ENCODE measurements at regions of chr4 and their contacts with region 1.

Region 1: GRCh38 chr4:169566021-169566818 is 46.2 kb downstream of the NEK1 start:
- DNase-seq: peak in 1 of 2 experiments; percentile 52
- H3K4me3 ChIP-seq: no peak overlapping the region
- H3K4me3 Mint-ChIP-seq: no peak overlapping the region
- H3K27ac Mint-ChIP-seq: no peak overlapping the region
- H3K4me1 ChIP-seq: no peaks in the 10 kb centered on the region
- H3K4me1 Mint-ChIP-seq: no peaks in the 10 kb centered on the region
- H3K27me3 ChIP-seq: no peaks in the 10 kb centered on the region
- H3K27me3 Mint-ChIP-seq: no peaks in the 10 kb centered on the region
- CTCF ChIP-seq: peak; percentile 56 to 63

Region 2: GRCh38 chr4:169410839-169411770 is 155.1 kb before region 1 on chr4:
- CTCF ChIA-PET with region 1: no interaction called
- POLR2A ChIA-PET with region 1: no interaction called
- intact Hi-C with region 1: no loop called
- DNase-seq: no peak
- H3K4me3 ChIP-seq: no peak overlapping the region
- H3K4me3 Mint-ChIP-seq: no peak overlapping the region
- H3K27ac Mint-ChIP-seq: no peak overlapping the region
- H3K4me1 ChIP-seq: 0 out of 2 replicates have a peak, but pooled peaks cover 6% of the 10 kb centered on the region
- H3K4me1 Mint-ChIP-seq: no peaks in the 10 kb centered on the region
- H3K27me3 ChIP-seq: no peaks in the 10 kb centered on the region
- H3K27me3 Mint-ChIP-seq: no peaks in the 10 kb centered on the region
- CTCF ChIP-seq: no peak

Region 3: GRCh38 chr4:169492438-169493163 is 73.6 kb before region 1 on chr4:
- CTCF ChIA-PET with region 1: no interaction called
- POLR2A ChIA-PET with region 1: no interaction called
- intact Hi-C with region 1: loop called (anchors 2 kb)
- DNase-seq: peak in 1 of 2 experiments; percentile 57
- H3K4me3 ChIP-seq: no peak overlapping the region
- H3K4me3 Mint-ChIP-seq: no peak overlapping the region
- H3K27ac Mint-ChIP-seq: no peak overlapping the region
- H3K4me1 ChIP-seq: no peaks in the 10 kb centered on the region
- H3K4me1 Mint-ChIP-seq: no peaks in the 10 kb centered on the region
- H3K27me3 ChIP-seq: no peaks in the 10 kb centered on the region
- H3K27me3 Mint-ChIP-seq: no peaks in the 10 kb centered on the region
- CTCF ChIP-seq: peak; percentile 74 to 81

Region 4: DNA sequence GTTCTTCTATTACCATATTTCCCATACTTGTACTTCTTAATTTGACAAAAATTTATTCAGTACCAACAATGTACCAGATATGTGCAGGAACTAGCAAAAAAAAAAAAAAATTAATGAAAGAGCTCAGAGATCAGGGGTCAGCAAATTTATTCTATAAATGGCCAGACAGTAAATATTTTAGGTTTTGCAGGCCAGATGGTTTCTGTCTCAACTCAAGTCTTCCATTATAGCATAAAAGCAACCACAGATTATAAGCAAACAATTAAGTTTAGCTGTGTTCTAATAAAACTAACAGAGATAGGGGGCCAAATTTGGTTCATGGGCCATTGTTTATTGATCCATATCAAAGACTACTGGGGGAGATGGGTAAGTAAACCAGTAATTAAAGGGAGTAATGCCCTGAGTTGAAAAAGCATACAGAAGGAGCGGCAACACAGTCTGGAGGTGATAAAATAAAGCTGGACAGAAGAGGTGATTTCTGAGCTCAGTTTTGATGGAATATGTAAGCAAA is 26.9 kb after region 1 on chr4:
- CTCF ChIA-PET with region 1: no interaction called
- POLR2A ChIA-PET with region 1: no interaction called
- intact Hi-C with region 1: no loop called
- DNase-seq: no peak
- H3K4me3 ChIP-seq: no peak overlapping the region
- H3K4me3 Mint-ChIP-seq: no peak overlapping the region
- H3K27ac Mint-ChIP-seq: no peak overlapping the region
- H3K4me1 ChIP-seq: no peaks in the 10 kb centered on the region
- H3K4me1 Mint-ChIP-seq: no peaks in the 10 kb centered on the region
- H3K27me3 ChIP-seq: no peaks in the 10 kb centered on the region
- H3K27me3 Mint-ChIP-seq: no peaks in the 10 kb centered on the region
- CTCF ChIP-seq: no peak

Measured in Caco-2 (cell line).